Common myeloid progenitor, CD34-positive (primary cell): ENCODE measurements at regions of chr1 and their contacts with region 1.

Region 1: GRCh38 chr1:161225534-161226319 is at the start of gene TOMM40L:
- DNase-seq: peak; percentile 100
- H3K4me3 ChIP-seq: peak within 1 kb of the TSS; percentile 60 to 99 (median 90)
- H3K27ac ChIP-seq: peak within 1 kb of the TSS in 1 of 2 experiments; percentile 67
- H3K4me1 ChIP-seq: peaks cover 2 to 33% (median 30%) of the 10 kb centered on the region in 4 experiments
- H3K27me3 ChIP-seq: no peaks in the 10 kb centered on the region

Region 2: DNA sequence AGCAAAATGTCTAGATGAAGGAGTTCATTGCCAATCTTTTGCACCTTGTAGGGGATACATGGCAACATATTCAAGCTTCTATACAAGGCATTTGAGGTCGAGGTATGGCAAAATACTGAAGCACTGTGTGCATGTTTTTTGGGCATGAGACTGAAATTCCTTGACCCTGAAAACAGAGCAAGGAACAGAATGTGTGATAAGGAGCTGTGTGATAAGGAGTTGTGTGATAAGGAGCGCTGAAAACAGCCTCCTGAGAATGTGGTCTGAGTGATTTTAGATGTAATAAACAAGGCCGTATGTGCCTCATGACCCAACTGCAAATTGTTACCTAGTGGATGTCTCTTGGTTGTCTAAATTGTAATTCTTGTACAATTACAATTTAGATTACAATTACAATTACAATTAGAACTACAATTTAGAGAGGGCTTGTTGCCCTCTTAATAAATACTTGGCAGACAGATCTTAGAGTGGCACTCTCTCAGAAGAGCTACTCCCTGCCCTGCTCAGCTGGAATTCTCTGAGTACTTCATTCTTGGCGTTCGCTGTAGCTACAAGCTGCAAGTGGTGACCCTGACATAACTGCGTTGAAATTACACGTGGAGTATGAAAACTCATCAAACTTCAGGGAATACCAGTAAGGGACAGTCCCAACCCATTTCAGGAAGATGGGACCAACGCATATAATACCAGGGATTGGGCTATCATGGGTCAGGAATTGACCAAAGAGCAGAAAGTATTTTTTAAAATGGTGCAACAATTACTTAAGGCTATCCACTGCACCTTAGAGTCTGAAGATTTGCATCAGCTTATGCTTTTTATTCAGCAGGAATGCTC is 320.7 kb before region 1 on chr1:
- CTCF ChIA-PET with region 1: no interaction called
- POLR2A ChIA-PET with region 1: no interaction called
- DNase-seq: no peak
- H3K4me3 ChIP-seq: no peak overlapping the region
- H3K27ac ChIP-seq: no peak overlapping the region
- H3K4me1 ChIP-seq: no peaks in the 10 kb centered on the region
- H3K27me3 ChIP-seq: no peaks in the 10 kb centered on the region

Region 3: DNA sequence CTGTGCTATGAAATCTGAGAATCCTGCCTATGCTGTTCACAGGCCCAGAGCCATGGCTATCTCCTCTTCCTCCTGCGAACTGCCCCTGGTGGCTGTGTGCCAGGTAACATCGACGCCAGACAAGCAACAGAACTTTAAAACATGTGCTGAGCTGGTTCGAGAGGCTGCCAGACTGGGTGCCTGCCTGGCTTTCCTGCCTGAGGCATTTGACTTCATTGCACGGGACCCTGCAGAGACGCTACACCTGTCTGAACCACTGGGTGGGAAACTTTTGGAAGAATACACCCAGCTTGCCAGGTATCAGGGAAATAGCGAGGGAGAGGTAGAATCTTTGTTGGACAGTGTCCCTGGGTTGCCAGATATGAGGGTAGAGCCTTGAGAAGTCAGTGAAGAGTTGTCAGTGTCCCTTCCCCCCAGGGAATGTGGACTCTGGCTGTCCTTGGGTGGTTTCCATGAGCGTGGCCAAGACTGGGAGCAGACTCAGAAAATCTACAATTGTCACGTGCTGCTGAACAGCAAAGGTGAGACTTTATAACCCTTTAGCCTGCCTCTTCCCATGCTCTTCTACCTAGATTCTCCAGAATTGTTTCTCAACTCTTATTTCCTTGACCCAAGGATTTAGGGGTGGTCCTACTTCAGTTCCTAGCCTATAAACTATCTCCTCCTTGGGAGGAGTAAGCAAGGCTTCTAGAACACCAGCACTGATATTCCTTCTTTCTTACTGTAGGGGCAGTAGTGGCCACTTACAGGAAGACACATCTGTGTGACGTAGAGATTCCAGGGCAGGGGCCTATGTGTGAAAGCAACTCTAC is 106.4 kb before region 1 on chr1:
- CTCF ChIA-PET with region 1: no interaction called
- POLR2A ChIA-PET with region 1: no interaction called
- DNase-seq: peak; percentile 63 to 84 (median 73)
- H3K4me3 ChIP-seq: peak overlapping the region in 6 of 7 experiments; percentile 0 to 100 (median 93)
- H3K27ac ChIP-seq: peak overlapping the region; percentile 18 to 93
- H3K4me1 ChIP-seq: peaks cover 23 to 65% (median 48%) of the 10 kb centered on the region in 4 experiments
- H3K27me3 ChIP-seq: no peaks in the 10 kb centered on the region

Region 4: DNA sequence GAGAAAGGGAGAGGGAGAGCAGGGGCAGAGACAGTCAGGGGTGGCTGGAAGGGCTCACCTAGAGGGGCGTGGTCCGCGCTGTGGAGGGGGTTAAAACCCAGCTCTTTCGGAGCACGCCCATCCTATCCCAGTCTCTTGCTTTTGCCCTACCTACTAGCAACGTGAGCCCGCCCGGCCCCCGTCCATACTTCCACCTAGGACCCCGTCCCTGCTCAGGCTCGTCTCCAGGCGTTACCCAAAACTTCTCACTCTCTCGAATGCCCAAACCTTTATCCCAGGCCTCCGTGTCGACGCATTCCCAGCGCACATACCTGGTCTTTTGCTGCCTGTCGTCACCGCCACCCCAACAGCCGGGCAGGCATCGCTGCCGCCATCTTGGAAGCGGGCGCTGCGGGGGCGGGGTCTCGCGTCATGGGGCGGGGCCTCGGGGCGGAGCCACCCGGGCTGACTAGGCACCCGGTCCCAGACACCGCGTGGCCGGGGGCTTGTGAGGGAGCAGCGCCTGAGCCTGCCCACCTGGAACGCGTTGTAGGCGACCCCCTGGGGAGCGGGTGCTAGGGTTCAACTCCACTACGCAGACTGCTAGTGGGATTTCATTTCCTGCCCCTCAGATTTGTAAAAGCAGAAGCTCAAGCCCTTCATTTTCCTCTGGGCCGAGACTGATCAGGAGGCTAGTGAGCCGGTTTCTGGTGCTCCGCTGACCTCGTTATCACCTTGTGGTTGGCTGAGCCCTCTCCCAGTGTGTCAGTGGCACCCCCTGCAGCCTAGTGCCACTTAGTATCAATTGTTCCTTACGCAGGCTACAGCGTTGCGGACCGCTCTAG is 48.4 kb before region 1 on chr1 and contains the start of gene B4GALT3:
- CTCF ChIA-PET with region 1: interaction called, 10 read pairs
- POLR2A ChIA-PET with region 1: no interaction called
- DNase-seq: peak; percentile 83 to 90 (median 86)
- H3K4me3 ChIP-seq: peak within 1 kb of the TSS; percentile 65 to 96 (median 94)
- H3K27ac ChIP-seq: peak within 1 kb of the TSS; percentile 77 to 86
- H3K4me1 ChIP-seq: peaks cover 1 to 32% (median 22%) of the 10 kb centered on the region in 4 experiments
- H3K27me3 ChIP-seq: no peaks in the 10 kb centered on the region

Region 5: DNA sequence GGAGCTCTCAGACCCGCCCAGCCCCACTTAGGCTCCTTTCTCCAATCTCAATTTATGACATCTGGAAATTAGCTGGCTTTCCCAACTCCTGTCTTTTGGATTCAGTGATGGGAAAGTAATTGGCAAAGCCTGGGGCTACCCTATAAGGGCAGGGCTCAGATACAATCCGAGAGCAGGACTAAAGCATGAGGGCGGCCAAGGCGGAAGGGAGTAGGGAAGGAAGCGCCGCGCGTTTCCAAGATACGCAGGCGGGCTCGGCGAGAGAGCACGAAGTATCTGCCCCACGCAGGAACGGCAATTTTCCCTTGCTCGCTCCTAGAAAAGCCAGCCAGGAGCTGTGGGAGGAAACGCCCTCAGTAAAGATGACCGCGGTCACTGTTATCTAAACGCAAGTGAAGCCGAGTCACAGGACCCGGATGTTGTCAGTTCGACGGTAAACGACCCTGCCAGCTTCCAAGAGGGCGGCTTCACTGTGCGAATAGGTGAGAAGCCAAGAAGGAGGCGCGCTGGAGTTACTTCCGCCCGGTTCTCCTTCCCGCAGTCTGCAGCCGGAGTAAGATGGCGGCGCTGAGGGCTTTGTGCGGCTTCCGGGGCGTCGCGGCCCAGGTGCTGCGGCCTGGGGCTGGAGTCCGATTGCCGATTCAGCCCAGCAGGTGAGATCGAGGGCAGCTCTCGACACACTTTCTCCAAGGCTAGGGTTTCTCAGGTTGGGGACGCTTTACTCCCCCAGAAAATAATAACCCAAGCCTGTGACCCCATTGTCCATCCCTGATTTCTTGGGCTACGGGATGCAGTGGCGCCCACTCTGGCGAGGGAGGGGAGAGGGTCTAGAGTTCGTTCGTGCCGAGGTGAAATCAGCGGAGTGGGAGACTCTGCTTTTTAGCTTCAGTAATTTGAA is 23.6 kb before region 1 on chr1 and contains the start of gene NDUFS2:
- CTCF ChIA-PET with region 1: interaction called, 316 read pairs
- POLR2A ChIA-PET with region 1: interaction called, 11 read pairs
- DNase-seq: peak; percentile 98 to 99 (median 98)
- H3K4me3 ChIP-seq: peak within 1 kb of the TSS; percentile 66 to 98 (median 89)
- H3K27ac ChIP-seq: peak within 1 kb of the TSS; percentile 77 to 89
- H3K4me1 ChIP-seq: peaks cover 0 to 54% (median 38%) of the 10 kb centered on the region in 4 experiments
- H3K27me3 ChIP-seq: no peaks in the 10 kb centered on the region

Region 6: GRCh38 chr1:161287482-161288054 is 61.8 kb after region 1 on chr1:
- CTCF ChIA-PET with region 1: interaction called, 137 read pairs
- POLR2A ChIA-PET with region 1: interaction called, 4 read pairs
- DNase-seq: peak in 2 of 3 donors; percentile 23 to 33
- H3K4me3 ChIP-seq: no peak overlapping the region
- H3K27ac ChIP-seq: no peak overlapping the region
- H3K4me1 ChIP-seq: peaks cover 0 to 7% (median 0%) of the 10 kb centered on the region in 4 experiments
- H3K27me3 ChIP-seq: no peaks in the 10 kb centered on the region

Region 7: DNA sequence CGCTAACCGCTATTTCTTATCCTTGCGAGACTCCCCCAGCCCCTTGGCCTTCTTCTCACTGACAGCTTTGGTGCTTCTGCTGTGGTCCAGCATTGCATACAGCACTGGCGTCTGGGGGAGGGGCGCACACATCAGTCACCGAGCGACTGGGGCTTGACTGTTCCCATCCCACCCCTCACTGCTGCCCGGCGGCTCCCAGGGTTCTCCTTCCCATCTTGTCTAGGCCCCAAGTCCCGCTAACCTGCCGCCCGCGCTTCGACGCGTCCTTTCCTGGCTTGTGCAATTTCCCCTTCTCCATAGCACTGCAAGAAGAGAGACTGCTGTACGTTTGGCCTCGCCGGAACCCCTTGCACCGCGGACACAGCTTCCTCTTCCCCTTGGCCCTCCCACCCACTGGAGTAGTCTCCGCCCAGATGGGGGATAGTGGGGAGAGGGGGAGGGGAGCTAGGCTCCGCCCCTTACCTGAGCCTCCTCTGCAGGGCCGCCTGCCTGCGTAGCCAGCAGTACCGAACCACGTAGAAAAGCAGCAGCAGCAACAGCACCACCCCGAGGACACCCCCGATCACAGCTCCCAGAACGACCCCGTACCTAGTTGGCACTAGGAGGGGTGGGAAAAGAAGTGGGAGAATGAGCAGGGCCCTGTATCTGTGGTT is 80.3 kb after region 1 on chr1:
- CTCF ChIA-PET with region 1: interaction called, 15 read pairs
- POLR2A ChIA-PET with region 1: no interaction called
- DNase-seq: peak; percentile 95 to 96 (median 96)
- H3K4me3 ChIP-seq: peak overlapping the region; percentile 25 to 92 (median 75)
- H3K27ac ChIP-seq: peak overlapping the region; percentile 61 to 86
- H3K4me1 ChIP-seq: peaks cover 9 to 44% (median 30%) of the 10 kb centered on the region in 4 experiments
- H3K27me3 ChIP-seq: no peaks in the 10 kb centered on the region

Region 8: GRCh38 chr1:161374373-161374772 is 148.6 kb after region 1 on chr1:
- CTCF ChIA-PET with region 1: interaction called, 40 read pairs
- POLR2A ChIA-PET with region 1: no interaction called
- DNase-seq: peak; percentile 33 to 51 (median 49)
- H3K4me3 ChIP-seq: no peak overlapping the region
- H3K27ac ChIP-seq: no peak overlapping the region
- H3K4me1 ChIP-seq: peaks cover 0 to 4% (median 0%) of the 10 kb centered on the region in 4 experiments
- H3K27me3 ChIP-seq: no peaks in the 10 kb centered on the region

Region 9: GRCh38 chr1:161486806-161487741 is 261.3 kb after region 1 on chr1:
- CTCF ChIA-PET with region 1: no interaction called
- POLR2A ChIA-PET with region 1: no interaction called
- DNase-seq: peak; percentile 72 to 86 (median 79)
- H3K4me3 ChIP-seq: no peak overlapping the region
- H3K27ac ChIP-seq: peak overlapping the region in 1 of 2 experiments; percentile 7
- H3K4me1 ChIP-seq: peaks cover 7 to 16% (median 12%) of the 10 kb centered on the region in 4 experiments
- H3K27me3 ChIP-seq: peaks cover 0 to 59% (median 12%) of the 10 kb centered on the region in 5 experiments